Natural killer cell (primary cell): ENCODE measurements at regions of chr6 and their contacts with region 1.

Region 1: GRCh38 chr6:136792410-136793262 is at the start of gene MAP3K5:
- DNase-seq: peak; percentile 93 to 96
- ATAC-seq: peak; percentile 74 to 90 (median 78)
- H3K4me3 ChIP-seq: peak within 1 kb of the TSS; percentile 85
- H3K4me3 Mint-ChIP-seq: peak within 1 kb of the TSS; percentile 90
- H3K27ac ChIP-seq: peak within 1 kb of the TSS; percentile 93
- H3K27ac Mint-ChIP-seq: peak within 1 kb of the TSS; percentile 96 to 99
- H3K4me1 ChIP-seq: peaks cover 24% of the 10 kb centered on the region
- H3K4me1 Mint-ChIP-seq: peaks cover 41 to 44% of the 10 kb centered on the region in 2 donors
- H3K27me3 ChIP-seq: no peaks in the 10 kb centered on the region
- H3K27me3 Mint-ChIP-seq: no peaks in the 10 kb centered on the region
- CTCF ChIP-seq: peak; percentile 82
- total RNA-seq, gene MAP3K5: 19.7 to 36.7 (median 35.4) TPM

Region 2: GRCh38 chr6:136471372-136471771 is 321.3 kb before region 1 on chr6:
- intact Hi-C with region 1: no loop called
- DNase-seq: no peak
- ATAC-seq: no peak
- H3K4me3 ChIP-seq: no peak overlapping the region
- H3K4me3 Mint-ChIP-seq: no peak overlapping the region
- H3K27ac ChIP-seq: no peak overlapping the region
- H3K27ac Mint-ChIP-seq: no peak overlapping the region
- H3K4me1 ChIP-seq: no peaks in the 10 kb centered on the region
- H3K4me1 Mint-ChIP-seq: peaks cover 0 to 4% of the 10 kb centered on the region in 2 donors
- H3K27me3 ChIP-seq: no peaks in the 10 kb centered on the region
- H3K27me3 Mint-ChIP-seq: peaks cover 9 to 11% of the 10 kb centered on the region in 2 donors
- CTCF ChIP-seq: no peak

Region 3: GRCh38 chr6:136582711-136583471 is 209.7 kb before region 1 on chr6:
- intact Hi-C with region 1: loop called (anchors 2 kb)
- DNase-seq: peak in 1 of 2 donors; percentile 10
- ATAC-seq: peak in 2 of 3 donors; percentile 43 to 57
- H3K4me3 ChIP-seq: no peak overlapping the region
- H3K4me3 Mint-ChIP-seq: no peak overlapping the region
- H3K27ac ChIP-seq: no peak overlapping the region
- H3K27ac Mint-ChIP-seq: peak overlapping the region; percentile 56 to 76
- H3K4me1 ChIP-seq: no peaks in the 10 kb centered on the region
- H3K4me1 Mint-ChIP-seq: peaks cover 0 to 6% of the 10 kb centered on the region in 2 donors
- H3K27me3 ChIP-seq: no peaks in the 10 kb centered on the region
- H3K27me3 Mint-ChIP-seq: no peaks in the 10 kb centered on the region
- CTCF ChIP-seq: peak; percentile 66

Region 4: GRCh38 chr6:136607932-136608772 is 184.5 kb before region 1 on chr6:
- intact Hi-C with region 1: loop called (anchors 1 kb)
- DNase-seq: peak; percentile 63 to 86
- ATAC-seq: peak; percentile 80 to 99 (median 96)
- H3K4me3 ChIP-seq: no peak overlapping the region
- H3K4me3 Mint-ChIP-seq: no peak overlapping the region
- H3K27ac ChIP-seq: no peak overlapping the region
- H3K27ac Mint-ChIP-seq: peak overlapping the region in 1 of 2 donors; percentile 47
- H3K4me1 ChIP-seq: no peaks in the 10 kb centered on the region
- H3K4me1 Mint-ChIP-seq: peaks cover 4 to 16% of the 10 kb centered on the region in 2 donors
- H3K27me3 ChIP-seq: no peaks in the 10 kb centered on the region
- H3K27me3 Mint-ChIP-seq: no peaks in the 10 kb centered on the region
- CTCF ChIP-seq: peak; percentile 81

Region 5: GRCh38 chr6:136643850-136644596 is 148.6 kb before region 1 on chr6:
- intact Hi-C with region 1: loop called (anchors 1 kb)
- DNase-seq: peak; percentile 69 to 90
- ATAC-seq: peak; percentile 49 to 69 (median 65)
- H3K4me3 ChIP-seq: no peak overlapping the region
- H3K4me3 Mint-ChIP-seq: no peak overlapping the region
- H3K27ac ChIP-seq: no peak overlapping the region
- H3K27ac Mint-ChIP-seq: peak overlapping the region in 1 of 2 donors; percentile 15
- H3K4me1 ChIP-seq: peaks cover 7% of the 10 kb centered on the region
- H3K4me1 Mint-ChIP-seq: peaks cover 8 to 11% of the 10 kb centered on the region in 2 donors
- H3K27me3 ChIP-seq: no peaks in the 10 kb centered on the region
- H3K27me3 Mint-ChIP-seq: no peaks in the 10 kb centered on the region
- CTCF ChIP-seq: peak; percentile 88

Region 6: DNA sequence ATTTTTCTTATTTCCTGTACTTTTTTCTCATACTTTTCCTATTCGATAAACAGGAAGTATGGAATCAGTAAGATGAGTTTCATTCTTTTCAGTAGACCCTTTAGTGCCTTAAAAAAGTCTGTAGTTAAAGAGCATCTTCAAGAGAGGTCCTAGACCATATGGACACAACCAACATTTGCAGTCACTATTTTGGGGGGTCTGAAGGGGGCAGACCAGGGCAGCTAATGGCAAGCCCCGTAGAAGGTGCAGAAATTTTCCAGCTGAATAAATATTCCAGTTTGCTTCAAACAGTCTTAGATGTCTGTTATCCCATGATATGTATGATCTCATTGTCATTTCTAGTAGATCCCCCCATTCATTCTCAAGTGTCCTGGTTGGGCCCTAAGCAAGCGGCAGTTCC is 53.1 kb before region 1 on chr6:
- intact Hi-C with region 1: loop called (anchors 1 kb)
- DNase-seq: peak in 1 of 2 donors; percentile 54
- ATAC-seq: peak in 2 of 3 donors; percentile 65 to 70
- H3K4me3 ChIP-seq: no peak overlapping the region
- H3K4me3 Mint-ChIP-seq: no peak overlapping the region
- H3K27ac ChIP-seq: no peak overlapping the region
- H3K27ac Mint-ChIP-seq: peak overlapping the region in 1 of 2 donors; percentile 56
- H3K4me1 ChIP-seq: peaks cover 3% of the 10 kb centered on the region
- H3K4me1 Mint-ChIP-seq: peaks cover 43 to 52% of the 10 kb centered on the region in 2 donors
- H3K27me3 ChIP-seq: no peaks in the 10 kb centered on the region
- H3K27me3 Mint-ChIP-seq: no peaks in the 10 kb centered on the region
- CTCF ChIP-seq: no peak

Region 7: GRCh38 chr6:136761227-136761922 is 31.3 kb before region 1 on chr6:
- intact Hi-C with region 1: loop called (anchors 1 kb)
- DNase-seq: peak; percentile 32 to 61
- ATAC-seq: peak; percentile 53 to 67 (median 63)
- H3K4me3 ChIP-seq: peak overlapping the region; percentile 11
- H3K4me3 Mint-ChIP-seq: peak overlapping the region; percentile 88
- H3K27ac ChIP-seq: peak overlapping the region; percentile 80
- H3K27ac Mint-ChIP-seq: peak overlapping the region; percentile 87 to 89
- H3K4me1 ChIP-seq: peaks cover 56% of the 10 kb centered on the region
- H3K4me1 Mint-ChIP-seq: peaks cover 61 to 62% of the 10 kb centered on the region in 2 donors
- H3K27me3 ChIP-seq: no peaks in the 10 kb centered on the region
- H3K27me3 Mint-ChIP-seq: no peaks in the 10 kb centered on the region
- CTCF ChIP-seq: no peak

Region 8: GRCh38 chr6:136822376-136823127 is 29.9 kb after region 1 on chr6 and contains the start of gene PEX7:
- intact Hi-C with region 1: loop called (anchors 2 kb)
- DNase-seq: peak; percentile 87 to 94
- ATAC-seq: peak; percentile 92 to 97 (median 93)
- H3K4me3 ChIP-seq: peak within 1 kb of the TSS; percentile 49
- H3K4me3 Mint-ChIP-seq: peak within 1 kb of the TSS; percentile 95
- H3K27ac ChIP-seq: peak within 1 kb of the TSS; percentile 43
- H3K27ac Mint-ChIP-seq: peak within 1 kb of the TSS; percentile 90 to 93
- H3K4me1 ChIP-seq: peaks cover 11% of the 10 kb centered on the region
- H3K4me1 Mint-ChIP-seq: peaks cover 20 to 23% of the 10 kb centered on the region in 2 donors
- H3K27me3 ChIP-seq: no peaks in the 10 kb centered on the region
- H3K27me3 Mint-ChIP-seq: peaks cover 6 to 12% of the 10 kb centered on the region in 2 donors
- CTCF ChIP-seq: peak; percentile 87
- total RNA-seq, gene PEX7: 2.4 to 3.6 (median 2.5) TPM

Region 9: GRCh38 chr6:136846046-136846445 is 53.4 kb after region 1 on chr6:
- intact Hi-C with region 1: no loop called
- DNase-seq: peak in 1 of 2 donors; percentile 71
- ATAC-seq: peak in 2 of 3 donors; percentile 65 to 68
- H3K4me3 ChIP-seq: no peak overlapping the region
- H3K4me3 Mint-ChIP-seq: no peak overlapping the region
- H3K27ac ChIP-seq: no peak overlapping the region
- H3K27ac Mint-ChIP-seq: no peak overlapping the region
- H3K4me1 ChIP-seq: no peaks in the 10 kb centered on the region
- H3K4me1 Mint-ChIP-seq: no peaks in the 10 kb centered on the region
- H3K27me3 ChIP-seq: no peaks in the 10 kb centered on the region
- H3K27me3 Mint-ChIP-seq: no peaks in the 10 kb centered on the region
- CTCF ChIP-seq: peak; percentile 83